Activated CD4-positive, alpha-beta memory T cell treated with anti-CD3 and anti-CD28 coated beads for 36 hours (primary cell): ENCODE measurements at regions of chr3 and their contacts with region 1.

Region 1: DNA sequence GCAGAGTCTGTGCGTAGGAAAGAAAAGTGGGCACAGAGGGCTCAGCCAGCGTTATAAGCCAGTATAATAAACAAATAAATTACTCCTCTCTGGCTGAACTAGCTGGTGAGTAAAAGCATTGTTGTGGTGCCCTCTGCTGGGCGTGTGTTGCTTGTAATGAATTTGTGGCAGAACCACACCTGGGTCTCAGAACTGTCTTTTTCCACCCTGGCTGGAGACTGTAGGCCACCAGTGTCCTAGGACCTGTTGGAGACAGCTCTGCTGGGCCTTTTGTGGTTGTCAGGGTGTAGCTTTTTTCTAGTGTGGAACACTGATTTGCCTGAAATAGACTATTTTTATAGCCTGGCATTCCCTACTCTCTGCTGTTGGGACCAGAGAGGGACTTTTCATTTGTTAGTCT is 130.5 kb upstream of the EIF1B start:
- DNase-seq: peak; percentile 72
- H3K4me3 Mint-ChIP-seq: no peak overlapping the region
- H3K27ac Mint-ChIP-seq: no peak overlapping the region
- H3K4me1 Mint-ChIP-seq: no peaks in the 10 kb centered on the region
- H3K27me3 Mint-ChIP-seq: no peaks in the 10 kb centered on the region

Region 2: DNA sequence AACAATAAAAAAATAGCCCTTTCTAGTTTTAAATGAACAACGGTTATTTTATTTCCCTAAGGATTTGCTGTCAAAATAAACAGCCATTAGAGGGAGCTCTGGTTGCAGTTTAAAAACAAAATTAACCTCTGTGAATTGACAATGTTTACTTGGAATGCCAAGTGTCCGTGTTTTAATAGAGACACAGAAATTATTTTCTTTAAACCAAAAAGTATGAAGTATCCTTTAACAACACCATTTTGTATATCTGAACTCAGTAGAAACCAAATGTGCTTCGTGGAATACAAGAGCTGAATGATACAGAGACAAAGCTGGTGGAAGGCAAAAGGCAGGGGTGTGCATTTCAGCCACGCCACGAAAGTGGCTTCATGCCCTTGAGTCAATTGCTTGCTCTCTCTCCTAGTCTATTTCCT is 637.1 kb before region 1 on chr3:
- CTCF ChIA-PET with region 1: interaction called, 11 read pairs
- POLR2A ChIA-PET with region 1: no interaction called
- intact Hi-C with region 1: no loop called
- DNase-seq: no peak
- H3K4me3 Mint-ChIP-seq: no peak overlapping the region
- H3K27ac Mint-ChIP-seq: no peak overlapping the region
- H3K4me1 Mint-ChIP-seq: peaks cover 6% of the 10 kb centered on the region
- H3K27me3 Mint-ChIP-seq: peaks cover 7% of the 10 kb centered on the region

Region 3: DNA sequence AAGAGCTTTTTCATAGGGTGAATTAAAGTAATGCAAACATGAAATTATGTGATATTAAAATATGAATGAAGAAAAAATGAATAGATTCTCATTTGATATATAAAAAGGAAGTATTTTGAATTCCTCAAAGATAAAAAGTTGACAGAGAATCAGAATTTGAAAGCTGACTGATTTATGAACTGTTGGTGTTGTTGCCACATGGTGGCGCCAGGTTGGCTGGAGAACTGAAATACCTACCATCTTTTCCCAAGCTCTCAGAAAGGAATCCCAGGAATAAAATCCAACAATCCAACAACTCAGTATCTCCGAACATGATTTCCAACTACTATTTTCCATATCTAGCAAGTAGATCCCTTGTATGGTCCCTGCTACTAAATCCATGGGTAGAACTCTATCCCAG is 366.5 kb before region 1 on chr3:
- CTCF ChIA-PET with region 1: interaction called, 3 read pairs
- POLR2A ChIA-PET with region 1: no interaction called
- intact Hi-C with region 1: loop called (anchors 10 kb)
- DNase-seq: no peak
- H3K4me3 Mint-ChIP-seq: no peak overlapping the region
- H3K27ac Mint-ChIP-seq: no peak overlapping the region
- H3K4me1 Mint-ChIP-seq: peaks cover 14% of the 10 kb centered on the region
- H3K27me3 Mint-ChIP-seq: peaks cover 39% of the 10 kb centered on the region